PC-3 (cell line): ENCODE measurements at regions of chr21 and their contacts with region 1.

Region 1: DNA sequence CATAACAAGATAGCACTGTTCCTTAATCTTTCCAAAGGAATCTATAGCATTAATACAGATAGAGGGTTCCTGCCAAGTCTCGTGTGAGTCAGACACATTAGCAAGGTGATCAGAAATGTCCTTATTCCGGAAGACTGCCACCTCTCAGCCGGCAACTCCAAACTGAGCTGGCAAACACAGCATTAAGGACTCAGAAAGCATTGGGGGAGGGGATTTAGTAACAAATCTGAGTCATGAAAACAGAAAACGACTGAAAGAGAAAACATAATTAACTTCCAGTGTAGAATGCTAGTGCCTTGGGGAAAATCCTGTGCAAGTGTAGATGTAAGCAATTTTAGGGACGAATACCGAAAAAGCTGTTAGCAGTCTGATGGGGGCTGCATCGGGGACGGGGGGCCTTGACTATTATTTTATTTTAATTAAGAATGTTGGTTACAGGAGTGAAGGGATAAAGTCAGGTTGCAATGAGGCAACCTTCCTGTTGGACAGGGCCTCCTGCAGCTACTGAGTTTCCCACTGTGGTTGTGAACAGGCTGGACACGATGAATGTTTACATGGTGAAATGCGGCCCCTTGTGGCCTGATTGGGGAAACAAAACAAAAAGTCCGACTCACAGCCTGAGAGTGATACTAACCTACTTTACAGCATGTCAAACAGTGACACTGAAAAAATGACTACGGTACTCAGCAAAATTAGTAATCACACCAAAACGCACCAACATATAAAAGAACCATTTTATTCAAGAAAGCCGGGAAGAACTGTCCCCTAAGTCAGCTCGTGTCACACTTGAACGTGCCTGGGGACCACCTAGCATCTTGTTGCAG is 20.7 kb downstream of the MIS18A start:
- DNase-seq: peak; percentile 89
- ATAC-seq: peak; percentile 92
- H3K4me3 ChIP-seq: no peak overlapping the region
- H3K27ac ChIP-seq: no peak overlapping the region
- H3K4me1 ChIP-seq: peaks cover 14% of the 10 kb centered on the region
- H3K27me3 ChIP-seq: peaks cover 7% of the 10 kb centered on the region; the same call in 1 of the 2 replicates
- CTCF ChIP-seq: peak; percentile 92

Region 2: DNA sequence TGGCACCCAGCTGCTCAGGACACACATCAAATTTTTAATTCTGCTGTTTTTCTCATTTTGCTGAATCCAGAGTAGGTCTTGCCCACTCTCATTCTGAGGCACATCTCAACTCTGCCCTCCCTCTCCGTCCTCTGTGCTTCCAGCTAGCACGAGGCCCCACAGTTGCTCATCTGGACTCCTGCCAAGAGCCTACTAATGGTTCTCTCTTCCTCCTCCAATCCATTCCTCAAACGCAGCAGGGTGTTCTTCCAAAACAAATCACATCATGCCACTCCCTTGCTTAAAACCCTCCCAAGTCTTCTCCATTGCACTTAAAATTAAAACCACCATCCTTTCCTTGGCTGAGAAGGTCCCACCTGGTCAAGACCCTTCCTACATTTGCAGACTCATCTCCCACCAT is 476.4 kb before region 1 on chr21:
- CTCF ChIA-PET with region 1: interaction called, 7 read pairs
- POLR2A ChIA-PET with region 1: interaction called, 3 read pairs
- intact Hi-C with region 1: loop called (anchors 1 kb)
- DNase-seq: peak; percentile 20
- ATAC-seq: no peak
- H3K4me3 ChIP-seq: no peak overlapping the region
- H3K27ac ChIP-seq: no peak overlapping the region
- H3K4me1 ChIP-seq: no peaks in the 10 kb centered on the region
- H3K27me3 ChIP-seq: no peaks in the 10 kb centered on the region
- CTCF ChIP-seq: no peak

Region 3: GRCh38 chr21:31866077-31866511 is 392.1 kb before region 1 on chr21:
- CTCF ChIA-PET with region 1: interaction called, 3 read pairs
- POLR2A ChIA-PET with region 1: no interaction called
- intact Hi-C with region 1: loop called (anchors 1 kb)
- DNase-seq: peak; percentile 87
- ATAC-seq: peak; percentile 99
- H3K4me3 ChIP-seq: no peak overlapping the region
- H3K27ac ChIP-seq: no peak overlapping the region
- H3K4me1 ChIP-seq: no peaks in the 10 kb centered on the region
- H3K27me3 ChIP-seq: peaks cover 47% of the 10 kb centered on the region
- CTCF ChIP-seq: peak; percentile 96

Region 4: GRCh38 chr21:32494934-32495703 is 236.9 kb after region 1 on chr21:
- CTCF ChIA-PET with region 1: no interaction called
- POLR2A ChIA-PET with region 1: no interaction called
- intact Hi-C with region 1: no loop called
- DNase-seq: peak; percentile 89
- ATAC-seq: peak; percentile 96
- H3K4me3 ChIP-seq: peak overlapping the region; percentile 10; the same call in 1 of the 2 replicates
- H3K27ac ChIP-seq: peak overlapping the region; percentile 94
- H3K4me1 ChIP-seq: peaks cover 34% of the 10 kb centered on the region
- H3K27me3 ChIP-seq: no peaks in the 10 kb centered on the region
- CTCF ChIP-seq: no peak

Region 5: DNA sequence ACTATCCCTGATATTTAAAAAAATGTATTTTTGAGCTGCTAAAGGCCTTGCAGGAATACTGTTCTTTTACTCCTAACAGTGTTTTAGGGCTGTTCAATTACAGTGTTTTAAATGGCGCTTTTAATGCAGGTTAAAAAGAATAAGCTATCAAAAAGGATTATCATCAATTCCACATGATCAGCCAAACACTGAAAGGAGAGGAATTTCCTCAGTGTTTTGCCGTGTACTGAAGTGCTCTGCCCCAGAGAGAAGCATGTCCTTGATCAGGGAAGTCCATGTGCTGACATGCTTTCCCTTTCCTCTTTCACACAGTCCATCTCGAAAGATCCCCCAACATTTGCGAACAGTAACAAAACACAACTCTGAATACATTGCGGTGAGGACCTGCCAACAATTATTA is 350.7 kb after region 1 on chr21:
- CTCF ChIA-PET with region 1: no interaction called
- POLR2A ChIA-PET with region 1: no interaction called
- intact Hi-C with region 1: no loop called
- DNase-seq: no peak
- ATAC-seq: no peak
- H3K4me3 ChIP-seq: no peak overlapping the region
- H3K27ac ChIP-seq: no peak overlapping the region
- H3K4me1 ChIP-seq: peaks cover 5% of the 10 kb centered on the region; the same call in 1 of the 2 replicates
- H3K27me3 ChIP-seq: no peaks in the 10 kb centered on the region
- CTCF ChIP-seq: no peak